ENCODE measurements at regions of chr17 and their contacts with region 1.

Region 1: DNA sequence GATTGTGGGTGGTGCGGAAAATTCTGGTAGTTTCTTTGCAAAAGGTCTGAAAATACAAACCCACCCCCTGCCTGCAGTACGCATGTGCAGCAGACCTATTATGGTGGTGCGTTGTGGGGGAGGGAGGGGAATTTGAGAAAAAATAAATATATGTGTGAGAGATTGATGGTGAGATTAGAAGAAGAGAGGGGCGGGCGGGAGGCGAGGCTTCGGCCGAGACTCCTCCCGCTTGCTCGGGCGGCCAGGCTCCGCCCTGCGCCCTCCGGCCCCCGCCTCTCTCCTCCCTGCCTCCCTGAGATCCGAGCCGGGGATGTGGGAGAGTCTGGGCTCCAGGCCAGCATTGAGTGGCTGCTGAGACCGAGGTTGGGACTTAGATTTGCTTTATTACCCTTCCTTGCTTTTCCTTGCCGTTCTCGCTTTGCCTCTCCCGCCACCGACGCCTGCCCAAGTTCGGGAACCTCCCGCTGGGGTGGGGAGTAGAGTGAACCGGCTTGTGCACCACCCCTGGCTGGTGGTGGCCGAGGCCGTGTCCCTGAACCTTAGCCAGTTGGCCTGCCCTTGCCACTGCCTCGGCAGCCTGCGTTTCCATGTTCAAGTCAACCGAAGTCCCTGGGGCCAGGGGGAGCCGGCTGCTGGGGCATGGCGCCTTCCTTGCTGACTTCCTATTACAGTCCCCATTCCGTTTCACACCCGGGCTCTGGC is 956 bp upstream of the CHD3 start:
- DNase-seq: peak; percentile 77 to 98 (median 92)

Region 2: GRCh38 chr17:7834962-7835813 is 52.4 kb before region 1 on chr17:
- intact Hi-C with region 1: loop called (anchors 5 kb)
- DNase-seq: peak; percentile 91 to 99 (median 97)

Measured in head of caudate nucleus (tissue), 42 donors.